Activated CD8-positive, alpha-beta memory T cell treated with anti-CD3 and anti-CD28 coated beads, Interleukin-2, amount 10 ng/mL, durations not matched to agents 7 days and 5 days (primary cell): ENCODE measurements at regions of chr1 and their contacts with region 1.

Region 1: GRCh38 chr1:38026592-38027200 is 14.2 kb downstream of the UTP11 start:
- DNase-seq: peak; percentile 66
- ATAC-seq: no peak
- H3K4me3 Mint-ChIP-seq: no peak overlapping the region
- H3K27ac Mint-ChIP-seq: peak overlapping the region; percentile 16
- H3K4me1 Mint-ChIP-seq: peaks cover 58% of the 10 kb centered on the region
- H3K27me3 Mint-ChIP-seq: no peaks in the 10 kb centered on the region

Region 2: DNA sequence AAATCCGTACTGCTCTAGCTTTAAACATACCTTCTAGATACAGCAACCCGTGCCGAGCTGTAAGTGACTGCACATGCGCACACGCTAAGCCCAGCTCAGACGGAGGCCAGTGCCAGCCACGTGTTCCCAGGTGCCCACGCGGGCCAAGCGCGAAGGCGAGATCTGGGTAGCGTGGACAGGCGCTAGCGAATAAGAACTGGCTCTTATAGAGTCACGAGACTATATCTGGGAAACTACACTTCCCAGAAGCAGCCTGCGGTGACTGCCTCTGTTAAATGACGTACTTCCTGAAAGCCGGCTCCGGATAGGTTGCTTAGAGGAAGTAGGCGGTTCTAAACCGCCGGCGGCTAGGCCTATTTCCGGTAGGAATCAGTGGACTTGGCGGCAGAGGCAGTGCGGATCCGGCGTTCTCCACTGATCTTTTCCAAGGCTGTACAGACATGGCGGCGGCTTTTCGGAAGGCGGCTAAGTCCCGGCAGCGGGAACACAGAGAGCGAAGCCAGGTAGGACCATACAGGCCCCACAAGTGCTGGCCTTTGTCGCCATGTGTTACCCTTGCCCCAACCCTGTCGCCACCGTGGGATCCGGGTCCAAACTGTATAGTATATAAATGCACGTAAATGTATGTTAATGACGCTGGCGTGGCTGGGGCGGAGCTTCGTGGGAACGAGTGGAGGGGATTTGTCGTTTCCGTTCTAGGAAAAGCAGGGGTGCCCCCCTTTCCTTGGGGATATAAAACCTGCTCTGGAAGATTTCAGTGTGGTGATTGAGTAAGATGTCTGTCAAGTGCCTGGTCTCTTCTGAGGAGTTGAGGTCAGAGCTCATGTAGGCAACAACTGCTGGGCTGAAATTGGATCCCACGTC is 14.1 kb before region 1 on chr1 and contains the start of gene UTP11:
- CTCF ChIA-PET with region 1: interaction called, 34 read pairs
- DNase-seq: peak; percentile 96
- ATAC-seq: peak; percentile 93
- H3K4me3 Mint-ChIP-seq: peak within 1 kb of the TSS; percentile 97
- H3K27ac Mint-ChIP-seq: peak within 1 kb of the TSS; percentile 98
- H3K4me1 Mint-ChIP-seq: peaks cover 57% of the 10 kb centered on the region
- H3K27me3 Mint-ChIP-seq: no peaks in the 10 kb centered on the region
- total RNA-seq, gene UTP11: 32.4 to 49.6 TPM